Activated naive CD4-positive, alpha-beta T cell treated with anti-CD3 and anti-CD28 coated beads for 36 hours (primary cell): ENCODE measurements at regions of chr6 and their contacts with region 1.

Region 1: DNA sequence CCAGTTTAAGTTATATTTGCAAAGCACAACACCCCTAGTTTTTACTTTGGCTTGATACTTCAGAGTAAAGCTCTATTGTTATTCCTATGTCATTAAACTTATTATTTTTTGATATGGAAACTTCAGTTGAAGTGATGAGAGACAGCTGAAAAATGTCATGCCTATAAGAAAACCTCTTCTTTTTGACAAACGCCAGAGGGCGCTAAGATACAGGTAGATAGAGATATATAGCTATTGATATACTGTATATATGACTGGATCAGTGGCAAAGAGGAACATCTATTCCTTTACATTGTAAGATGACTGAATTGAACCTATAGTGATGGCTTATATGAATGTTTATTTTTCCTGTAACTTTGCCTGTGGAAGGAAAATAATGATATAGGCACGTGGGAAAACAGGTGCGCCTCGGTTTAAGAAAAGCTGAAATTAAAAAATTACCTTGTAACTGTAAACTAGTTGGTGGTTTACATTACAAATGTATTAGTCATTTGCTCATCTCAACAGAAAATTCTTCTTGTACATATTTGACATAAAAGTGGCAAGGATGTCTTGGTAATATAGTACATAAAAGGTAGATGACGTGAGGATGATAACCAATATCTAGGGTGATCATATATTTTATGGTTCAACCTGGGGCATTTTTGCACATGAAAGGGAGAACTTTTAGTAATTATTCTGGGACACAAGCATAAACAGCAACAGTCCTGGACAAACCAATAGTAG is 74.1 kb downstream of the LAMA4 start:
- DNase-seq: peak; percentile 69
- H3K4me3 Mint-ChIP-seq: no peak overlapping the region
- H3K27ac Mint-ChIP-seq: no peak overlapping the region
- H3K4me1 Mint-ChIP-seq: no peaks in the 10 kb centered on the region
- H3K27me3 Mint-ChIP-seq: no peaks in the 10 kb centered on the region

Region 2: GRCh38 chr6:111985202-111985731 is 195.0 kb before region 1 on chr6:
- CTCF ChIA-PET with region 1: no interaction called
- intact Hi-C with region 1: no loop called
- DNase-seq: peak; percentile 76
- H3K4me3 Mint-ChIP-seq: peak overlapping the region; percentile 9
- H3K27ac Mint-ChIP-seq: peak overlapping the region; percentile 94
- H3K4me1 Mint-ChIP-seq: peaks cover 87% of the 10 kb centered on the region
- H3K27me3 Mint-ChIP-seq: no peaks in the 10 kb centered on the region

Region 3: DNA sequence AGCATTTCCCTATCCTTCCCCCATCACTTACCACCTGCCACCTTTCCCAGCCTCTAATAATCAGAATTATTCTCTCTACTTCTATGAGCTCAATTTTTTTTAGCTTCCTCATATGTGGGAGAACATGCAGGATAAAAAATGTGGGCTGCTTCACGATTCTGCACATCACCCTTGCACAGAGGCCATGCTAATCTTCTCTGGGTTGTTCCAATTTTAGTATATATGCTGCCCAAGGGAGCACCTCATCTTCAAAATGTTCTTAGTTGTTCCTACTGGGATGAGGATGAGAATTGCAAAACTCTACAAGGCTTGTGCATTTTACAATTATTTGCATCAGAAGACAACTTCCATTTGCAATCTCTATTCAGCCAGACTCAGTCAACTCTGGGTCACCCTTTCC is 16.0 kb after region 1 on chr6:
- CTCF ChIA-PET with region 1: interaction called, 27 read pairs
- intact Hi-C with region 1: no loop called
- DNase-seq: no peak
- H3K4me3 Mint-ChIP-seq: no peak overlapping the region
- H3K27ac Mint-ChIP-seq: no peak overlapping the region
- H3K4me1 Mint-ChIP-seq: no peaks in the 10 kb centered on the region
- H3K27me3 Mint-ChIP-seq: no peaks in the 10 kb centered on the region

Region 4: GRCh38 chr6:112254921-112255320 is 74.7 kb after region 1 on chr6:
- CTCF ChIA-PET with region 1: interaction called, 6 read pairs
- intact Hi-C with region 1: loop called (anchors 5 kb)
- DNase-seq: no peak
- H3K4me3 Mint-ChIP-seq: peak overlapping the region; percentile 64
- H3K27ac Mint-ChIP-seq: no peak overlapping the region
- H3K4me1 Mint-ChIP-seq: peaks cover 14% of the 10 kb centered on the region
- H3K27me3 Mint-ChIP-seq: peaks cover 26% of the 10 kb centered on the region

Region 5: DNA sequence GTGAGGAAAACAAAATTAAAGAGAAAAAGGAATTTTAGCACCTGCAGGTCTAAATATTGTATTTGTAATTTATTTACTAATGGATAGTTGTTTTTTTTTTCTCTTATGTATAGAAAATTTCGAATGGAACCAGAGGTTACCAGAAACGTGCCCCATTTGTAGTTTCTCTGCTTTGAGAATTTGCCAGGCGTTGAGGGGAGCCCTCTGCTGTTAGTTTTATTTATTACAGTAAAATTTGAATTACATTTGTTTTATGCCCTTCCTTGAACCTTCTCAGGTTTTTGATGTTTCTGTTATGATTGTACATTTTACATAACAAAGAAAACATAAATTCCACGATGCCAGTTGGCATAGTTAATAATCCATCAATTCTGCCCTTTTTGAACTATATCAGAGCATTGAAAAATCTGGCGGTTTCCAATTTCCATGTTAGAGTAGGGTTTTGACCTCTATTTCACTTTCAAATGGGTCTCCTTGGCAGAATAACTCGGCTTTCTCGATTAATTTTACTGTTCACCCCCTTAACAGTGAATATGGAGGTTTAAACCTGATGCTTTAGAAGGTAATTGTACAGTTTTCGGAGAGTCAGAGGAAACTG is 131.8 kb after region 1 on chr6:
- CTCF ChIA-PET with region 1: interaction called, 56 read pairs
- intact Hi-C with region 1: loop called (anchors 1 kb)
- DNase-seq: peak; percentile 17
- H3K4me3 Mint-ChIP-seq: no peak overlapping the region
- H3K27ac Mint-ChIP-seq: no peak overlapping the region
- H3K4me1 Mint-ChIP-seq: no peaks in the 10 kb centered on the region
- H3K27me3 Mint-ChIP-seq: no peaks in the 10 kb centered on the region

Region 6: DNA sequence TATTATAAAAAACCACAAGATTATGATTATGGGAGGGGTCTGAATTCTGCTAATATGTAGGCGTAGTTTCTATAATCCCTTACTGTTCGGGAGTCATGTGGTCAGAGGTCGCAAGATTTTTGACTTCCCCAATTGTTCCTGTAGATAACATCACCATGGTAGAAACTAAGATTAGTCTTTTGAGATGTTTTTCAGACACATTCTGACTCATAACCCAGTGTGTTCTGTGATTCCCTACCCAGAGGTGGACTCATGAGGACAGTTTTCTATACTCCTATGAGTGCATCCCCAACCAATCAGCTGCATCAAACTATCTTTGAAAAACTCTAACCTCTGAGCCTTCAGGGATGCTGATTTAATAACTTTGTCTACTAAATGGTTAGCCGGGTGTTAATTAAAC is 342.3 kb after region 1 on chr6:
- CTCF ChIA-PET with region 1: no interaction called
- intact Hi-C with region 1: loop called (anchors 10 kb)
- DNase-seq: no peak
- H3K4me3 Mint-ChIP-seq: no peak overlapping the region
- H3K27ac Mint-ChIP-seq: no peak overlapping the region
- H3K4me1 Mint-ChIP-seq: no peaks in the 10 kb centered on the region
- H3K27me3 Mint-ChIP-seq: no peaks in the 10 kb centered on the region

Region 7: DNA sequence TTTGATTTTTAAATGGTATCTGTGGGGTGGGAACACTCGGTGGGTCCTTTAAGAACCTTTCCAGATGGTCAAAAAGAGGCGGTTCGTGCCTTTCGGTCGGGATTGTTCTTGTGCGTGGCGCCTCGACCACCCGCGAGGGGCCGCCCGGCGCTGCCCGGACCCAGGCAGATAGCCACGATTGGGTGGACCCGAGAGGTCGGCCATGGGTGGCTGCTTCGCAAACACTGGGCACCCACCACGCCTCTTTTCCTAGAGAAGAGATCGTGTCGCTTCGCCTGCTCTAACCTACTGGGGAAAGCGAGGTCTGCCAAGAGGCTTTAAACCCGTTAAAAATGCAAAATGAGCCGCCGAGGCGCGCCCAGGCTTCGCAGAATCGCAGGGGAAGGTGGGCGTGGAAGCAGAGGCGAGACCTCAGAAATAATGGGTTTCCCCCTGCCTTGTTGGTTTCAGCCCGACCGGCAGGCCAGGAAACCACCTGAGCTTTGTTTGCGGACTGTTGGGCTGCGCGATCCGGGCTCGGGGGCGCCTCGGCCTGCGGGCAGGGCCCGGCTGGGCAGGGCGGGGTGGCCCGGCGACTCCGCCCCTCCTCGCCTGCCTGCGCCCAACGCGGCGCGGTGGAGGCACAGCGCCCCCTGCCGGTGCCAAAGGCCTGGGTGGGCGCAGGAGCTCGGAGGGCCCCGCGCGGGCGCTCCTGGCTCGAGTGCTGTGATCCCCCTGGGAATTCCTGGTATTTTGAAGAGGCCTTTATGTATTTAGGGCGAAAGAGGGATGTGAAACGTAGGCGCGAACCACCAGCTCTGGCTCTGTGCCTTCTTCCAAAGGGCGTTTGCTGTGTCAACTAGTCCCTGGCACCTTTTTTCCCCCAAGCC is 1678.5 kb after region 1 on chr6:
- CTCF ChIA-PET with region 1: interaction called, 3 read pairs
- intact Hi-C with region 1: loop called (anchors 2 kb)
- DNase-seq: peak; percentile 83
- H3K4me3 Mint-ChIP-seq: peak overlapping the region; percentile 34
- H3K27ac Mint-ChIP-seq: no peak overlapping the region
- H3K4me1 Mint-ChIP-seq: peaks cover 24% of the 10 kb centered on the region
- H3K27me3 Mint-ChIP-seq: peaks cover 36% of the 10 kb centered on the region